PC-9 (cell line): ENCODE measurements at regions of chr19 and their contacts with region 1.

Region 1: GRCh38 chr19:10112037-10112761 is 706 bp downstream of the P2RY11 start:
- DNase-seq: no peak
- H3K4me3 ChIP-seq: no peak overlapping the region
- H3K27ac ChIP-seq: no peak overlapping the region
- H3K4me1 ChIP-seq: peaks cover 8% of the 10 kb centered on the region
- H3K27me3 ChIP-seq: no peaks in the 10 kb centered on the region
- CTCF ChIP-seq: no peak

Region 2: GRCh38 chr19:10000171-10000826 is 111.9 kb before region 1 on chr19:
- CTCF ChIA-PET with region 1: no interaction called
- POLR2A ChIA-PET with region 1: no interaction called
- intact Hi-C with region 1: no loop called
- DNase-seq: peak; percentile 60 to 64
- H3K4me3 ChIP-seq: no peak overlapping the region
- H3K27ac ChIP-seq: no peak overlapping the region
- H3K4me1 ChIP-seq: no peaks in the 10 kb centered on the region
- H3K27me3 ChIP-seq: peaks cover 77% of the 10 kb centered on the region
- CTCF ChIP-seq: peak; percentile 92

Region 3: GRCh38 chr19:10206226-10206885 is 94.2 kb after region 1 on chr19:
- CTCF ChIA-PET with region 1: interaction called, 11 read pairs
- POLR2A ChIA-PET with region 1: no interaction called
- intact Hi-C with region 1: no loop called
- DNase-seq: peak; percentile 89 to 91
- H3K4me3 ChIP-seq: no peak overlapping the region
- H3K27ac ChIP-seq: peak overlapping the region; percentile 67
- H3K4me1 ChIP-seq: peaks cover 45% of the 10 kb centered on the region
- H3K27me3 ChIP-seq: no peaks in the 10 kb centered on the region
- CTCF ChIP-seq: no peak